ENCODE measurements at regions of chr11 and their contacts with region 1.

Region 1: DNA sequence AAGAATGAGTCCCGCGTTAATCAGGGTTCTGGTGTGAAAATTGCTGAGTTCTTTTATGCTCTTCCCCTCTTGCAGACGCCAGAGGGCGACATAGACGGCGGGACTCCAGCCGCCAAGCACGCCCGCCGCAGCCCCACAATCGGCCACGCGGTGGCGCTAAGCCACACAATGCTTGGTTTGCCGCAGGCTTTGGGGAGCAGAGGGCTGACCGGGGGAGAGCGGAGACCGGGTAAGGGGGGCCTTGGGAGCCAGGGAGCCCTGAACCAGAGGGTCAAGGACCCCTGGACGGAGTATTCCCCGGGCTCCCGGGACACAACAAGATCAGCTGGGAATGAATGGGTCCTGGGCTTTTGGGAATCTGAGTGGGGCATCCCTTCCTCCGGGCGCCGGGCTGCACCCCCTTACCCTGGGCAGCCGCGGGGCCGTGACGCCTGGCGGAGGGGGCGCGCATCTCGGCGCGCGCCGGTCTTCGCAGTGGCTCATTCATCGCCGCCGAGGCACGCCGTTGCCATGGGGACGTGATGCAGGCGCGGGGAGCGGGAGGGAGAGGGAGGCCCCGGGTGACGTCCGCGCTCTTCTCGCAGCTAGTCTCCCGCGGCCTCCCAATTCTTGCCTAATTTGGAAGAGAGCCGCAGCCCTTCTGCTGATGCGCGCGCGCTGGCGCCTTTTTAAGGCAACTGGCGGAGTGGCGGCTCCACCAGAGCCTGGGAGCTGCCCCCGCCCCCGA is 12.2 kb upstream of the NPAS4 start:
- DNase-seq: peak; percentile 90 to 93 (median 92)
- ATAC-seq: peak; percentile 93
- H3K4me3 ChIP-seq: no peak overlapping the region
- H3K27ac ChIP-seq: no peak overlapping the region
- H3K4me1 ChIP-seq: peaks cover 7 to 9% of the 10 kb centered on the region in 2 experiments; a peak in 2 of 5 replicates
- H3K27me3 ChIP-seq: peaks cover 55 to 70% of the 10 kb centered on the region in 2 experiments
- CTCF ChIP-seq: peak; percentile 99 to 100 (median 99)
- EP300 ChIP-seq: peak; percentile 31; the same call in 1 of the 2 replicates
- POLR2A ChIP-seq: no peak
- RAD21 ChIP-seq: peak; percentile 100

Region 2: DNA sequence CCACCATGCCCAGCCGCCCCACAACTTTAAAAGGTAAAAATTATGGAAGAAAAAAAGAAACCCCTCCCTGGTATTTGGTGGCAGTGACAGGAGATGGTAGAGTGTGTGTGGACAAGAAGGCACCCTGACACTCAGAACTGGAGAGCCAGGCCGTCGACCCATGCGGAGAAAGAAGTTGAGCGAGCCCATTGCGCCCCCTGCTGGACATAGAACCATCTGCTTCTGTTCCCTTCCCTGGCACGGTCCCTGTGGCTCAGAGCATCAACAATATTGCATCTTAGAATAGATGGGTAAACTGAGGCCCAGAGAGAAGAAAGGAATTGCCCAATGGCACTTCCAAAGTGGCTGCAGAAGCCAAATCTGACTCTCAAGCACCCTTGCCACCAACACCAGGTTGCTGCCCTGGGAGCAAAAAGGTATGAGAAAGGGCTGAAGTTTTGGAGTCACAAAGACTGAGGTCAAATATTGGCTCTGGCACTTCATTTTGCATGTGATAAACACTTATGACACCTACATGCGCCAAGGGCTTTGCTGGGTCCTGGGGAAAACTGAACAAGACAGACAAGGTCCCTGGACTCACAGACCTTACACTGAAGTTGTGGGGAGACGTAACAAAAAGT is 21.4 kb after region 1 on chr11:
- CTCF ChIA-PET with region 1: interaction called, 52 read pairs
- POLR2A ChIA-PET with region 1: interaction called, 3 read pairs
- in situ Hi-C with region 1: no loop called
- intact Hi-C with region 1: loop called (anchors 1 kb)
- DNase-seq: peak; percentile 73 to 84 (median 75)
- ATAC-seq: peak; percentile 97
- H3K4me3 ChIP-seq: no peak overlapping the region
- H3K27ac ChIP-seq: no peak overlapping the region
- H3K4me1 ChIP-seq: peaks cover 3 to 5% of the 10 kb centered on the region in 2 experiments; a peak in 3 of 5 replicates
- H3K27me3 ChIP-seq: no peaks in the 10 kb centered on the region
- CTCF ChIP-seq: peak; percentile 88 to 91 (median 91)
- EP300 ChIP-seq: no peak
- POLR2A ChIP-seq: no peak
- RAD21 ChIP-seq: peak; percentile 64 to 76

Region 3: DNA sequence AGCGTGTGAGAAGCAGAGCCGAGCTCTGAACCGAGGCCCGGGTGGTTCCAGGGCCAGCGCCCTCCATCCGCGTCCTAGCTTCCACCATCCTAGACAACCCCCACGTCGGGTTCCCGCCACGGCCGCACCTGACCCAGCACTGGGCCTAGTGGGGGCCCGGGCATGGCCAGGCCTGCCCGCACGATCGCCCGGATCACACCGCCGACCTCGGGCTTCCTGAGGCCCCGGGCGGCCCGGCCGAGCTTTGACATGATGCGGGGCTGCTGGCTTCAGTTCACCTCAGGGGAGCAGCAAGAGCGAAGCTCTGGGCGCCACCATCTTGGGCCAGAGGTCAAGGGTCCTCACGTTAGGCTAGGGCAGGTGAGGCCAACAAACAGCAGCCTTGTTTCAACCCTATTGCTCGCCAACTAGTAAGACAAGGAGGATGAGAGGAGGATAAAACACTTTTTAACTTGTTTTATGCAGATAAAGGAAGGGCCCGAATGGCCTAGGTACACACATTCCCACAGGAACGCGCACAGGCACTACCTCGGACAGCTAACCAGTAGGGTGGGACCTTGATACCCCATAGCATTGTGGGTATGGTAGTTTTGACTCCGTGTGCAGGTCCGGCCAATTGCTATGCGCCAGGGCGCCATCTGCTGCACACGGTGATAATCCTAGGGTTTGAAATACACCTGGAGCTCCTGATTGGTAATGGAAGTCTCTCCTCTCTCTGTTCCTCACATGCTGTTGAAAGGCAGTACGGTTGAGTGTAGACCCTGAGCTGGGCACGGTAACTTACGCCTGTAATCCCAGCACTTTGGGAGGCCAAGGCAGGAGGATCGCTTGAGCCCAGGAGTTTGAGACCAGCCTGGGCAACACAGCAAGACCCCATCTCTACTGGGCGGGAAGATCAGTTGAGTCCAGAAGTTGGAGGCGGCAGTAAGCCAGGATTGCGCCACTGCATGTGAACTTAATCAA is 30.1 kb after region 1 on chr11 and contains the start of gene MRPL11:
- CTCF ChIA-PET with region 1: interaction called, 21 read pairs
- POLR2A ChIA-PET with region 1: no interaction called
- in situ Hi-C with region 1: no loop called
- intact Hi-C with region 1: no loop called
- DNase-seq: peak; percentile 93 to 96 (median 95)
- ATAC-seq: peak; percentile 99
- H3K4me3 ChIP-seq: peak within 1 kb of the TSS; percentile 86
- H3K27ac ChIP-seq: peak within 1 kb of the TSS; percentile 89
- H3K4me1 ChIP-seq: peaks cover 3 to 12% of the 10 kb centered on the region in 2 experiments; a peak in 3 of 5 replicates
- H3K27me3 ChIP-seq: peaks cover 0 to 10% of the 10 kb centered on the region in 2 experiments; a peak in 2 of 5 replicates
- CTCF ChIP-seq: peak; percentile 78 to 91 (median 91)
- EP300 ChIP-seq: no peak; the same call in 1 of the 2 replicates
- POLR2A ChIP-seq: peak; percentile 86
- RAD21 ChIP-seq: peak; percentile 49 to 66
- polyA plus RNA-seq, gene MRPL11: 33.0 to 43.5 TPM

Region 4: GRCh38 chr11:66480117-66480938 is 71.7 kb after region 1 on chr11 and contains the start of gene DPP3:
- CTCF ChIA-PET with region 1: interaction called, 50 read pairs
- POLR2A ChIA-PET with region 1: no interaction called
- in situ Hi-C with region 1: no loop called
- intact Hi-C with region 1: loop called (anchors 1 kb)
- DNase-seq: peak; percentile 98 to 100 (median 99)
- ATAC-seq: peak; percentile 98
- H3K4me3 ChIP-seq: peak within 1 kb of the TSS; percentile 65
- H3K27ac ChIP-seq: peak within 1 kb of the TSS; percentile 92
- H3K4me1 ChIP-seq: peaks cover 3 to 31% of the 10 kb centered on the region in 2 experiments; a peak in 4 of 5 replicates
- H3K27me3 ChIP-seq: no peaks in the 10 kb centered on the region
- CTCF ChIP-seq: no peak
- EP300 ChIP-seq: no peak
- POLR2A ChIP-seq: peak; percentile 94
- RAD21 ChIP-seq: 0 out of 4 replicates have a peak, but pooled peaks of 1 of the 2 experiments have one; percentile 6
- polyA plus RNA-seq, gene DPP3: 3.7 to 6.2 TPM

Region 5: DNA sequence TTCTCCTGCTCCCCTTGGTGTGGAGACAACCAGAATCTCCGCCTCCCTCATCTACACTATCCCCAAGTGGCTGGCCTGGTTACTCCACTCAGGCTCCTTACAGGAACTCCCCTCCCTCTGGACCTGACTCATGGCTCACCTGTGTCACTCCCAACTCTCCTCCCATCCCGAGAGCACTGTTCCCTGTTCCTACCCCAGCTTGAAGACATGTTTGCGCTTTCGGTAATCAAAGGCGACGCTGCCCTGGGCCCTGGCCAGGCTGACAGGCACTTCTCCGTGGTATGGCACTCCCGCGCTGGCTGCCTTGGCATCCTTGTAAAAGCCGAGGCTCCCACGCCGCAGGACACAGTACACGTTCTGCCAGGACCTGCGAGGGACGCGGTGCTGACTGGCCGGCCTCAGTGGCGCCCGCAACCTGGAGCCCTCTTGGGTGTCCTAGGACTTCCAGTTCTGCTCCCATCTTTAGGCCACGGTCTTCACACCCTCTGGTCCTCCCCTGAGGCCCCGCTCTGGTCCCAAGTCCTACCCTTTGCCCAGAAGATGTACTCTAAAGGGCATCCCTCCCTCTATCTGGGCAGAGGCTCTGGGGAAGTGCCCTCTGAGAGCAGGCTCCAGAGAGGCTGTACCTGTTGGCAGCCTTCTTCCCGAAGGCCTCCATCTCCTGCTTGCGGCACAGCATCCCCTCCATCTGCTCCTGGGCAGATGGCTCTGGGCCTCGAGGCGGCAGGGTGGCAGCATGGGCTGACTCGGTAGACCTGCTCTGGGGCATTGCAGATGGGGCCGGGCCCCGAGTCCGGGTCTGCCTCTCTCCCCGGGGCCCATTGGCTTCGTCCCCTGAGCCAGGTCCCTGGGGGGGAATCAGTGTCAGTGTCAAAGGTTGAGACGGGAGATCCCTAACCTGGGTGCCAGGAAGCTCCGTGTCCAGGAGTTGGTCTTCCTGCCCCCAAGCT is 278.4 kb after region 1 on chr11:
- CTCF ChIA-PET with region 1: interaction called, 3 read pairs
- POLR2A ChIA-PET with region 1: interaction called, 3 read pairs
- in situ Hi-C with region 1: loop called (anchors 5 kb)
- intact Hi-C with region 1: no loop called
- DNase-seq: no peak
- ATAC-seq: no peak
- H3K4me3 ChIP-seq: no peak overlapping the region
- H3K27ac ChIP-seq: no peak overlapping the region
- H3K4me1 ChIP-seq: peaks cover 0 to 3% of the 10 kb centered on the region in 2 experiments; a peak in 1 of 5 replicates
- H3K27me3 ChIP-seq: no peaks in the 10 kb centered on the region
- CTCF ChIP-seq: no peak
- EP300 ChIP-seq: no peak
- POLR2A ChIP-seq: no peak
- RAD21 ChIP-seq: no peak

Region 6: GRCh38 chr11:66694732-66695207 is 286.1 kb after region 1 on chr11:
- CTCF ChIA-PET with region 1: interaction called, 10 read pairs
- POLR2A ChIA-PET with region 1: no interaction called
- in situ Hi-C with region 1: no loop called
- intact Hi-C with region 1: no loop called
- DNase-seq: peak; percentile 84 to 95 (median 87)
- ATAC-seq: peak; percentile 99
- H3K4me3 ChIP-seq: no peak overlapping the region
- H3K27ac ChIP-seq: no peak overlapping the region; the same call in 2 of the 3 replicates
- H3K4me1 ChIP-seq: peaks cover 0 to 23% of the 10 kb centered on the region in 2 experiments; a peak in 2 of 5 replicates
- H3K27me3 ChIP-seq: no peaks in the 10 kb centered on the region
- CTCF ChIP-seq: peak; percentile 98 to 99 (median 98)
- EP300 ChIP-seq: no peak
- POLR2A ChIP-seq: no peak
- RAD21 ChIP-seq: peak; percentile 98 to 99

Region 7: DNA sequence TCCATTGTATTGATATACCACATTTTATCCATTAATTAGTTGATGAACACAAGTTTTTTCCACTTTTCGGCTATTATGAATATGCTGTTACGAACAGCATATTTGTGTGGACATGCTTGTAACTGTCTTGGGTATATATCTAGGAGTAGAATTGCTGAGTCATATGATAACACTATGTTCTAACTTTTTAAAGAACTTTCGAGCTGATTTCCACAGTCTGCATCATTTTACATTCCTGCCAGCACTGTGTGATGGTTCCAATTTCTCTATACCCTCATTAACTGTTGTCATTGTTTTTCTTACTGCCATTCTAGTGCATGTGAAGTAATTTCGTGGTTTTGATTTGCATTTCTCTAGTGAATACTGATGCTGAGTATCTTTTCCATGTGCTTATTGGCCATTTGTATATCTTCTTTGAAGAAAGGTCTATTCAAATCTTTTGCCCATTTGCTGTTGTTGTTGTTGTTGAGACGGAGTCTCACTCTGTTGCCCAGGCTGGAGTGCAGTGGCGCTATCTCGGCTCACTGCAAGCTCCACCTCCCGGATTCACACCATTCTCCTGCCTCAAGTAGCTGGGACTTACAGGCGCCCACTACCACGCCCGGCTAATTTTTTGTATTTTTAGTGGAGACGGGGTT is 427.2 kb after region 1 on chr11:
- CTCF ChIA-PET with region 1: interaction called, 51 read pairs
- POLR2A ChIA-PET with region 1: interaction called, 3 read pairs
- in situ Hi-C with region 1: loop called (anchors 5 kb)
- intact Hi-C with region 1: loop called (anchors 1 kb)
- DNase-seq: no peak
- ATAC-seq: peak; percentile 58
- H3K4me3 ChIP-seq: no peak overlapping the region
- H3K27ac ChIP-seq: peak overlapping the region; percentile 36; the same call in 2 of the 3 replicates
- H3K4me1 ChIP-seq: peaks cover 29 to 41% of the 10 kb centered on the region in 2 experiments
- H3K27me3 ChIP-seq: no peaks in the 10 kb centered on the region
- CTCF ChIP-seq: no peak
- EP300 ChIP-seq: peak; percentile 69
- POLR2A ChIP-seq: 0 out of 2 replicates have a peak, but pooled peaks have one; percentile 11
- RAD21 ChIP-seq: no peak